Left cardiac atrium (tissue), 4 donors: ENCODE measurements at regions of chr11 and their contacts with region 1.

Region 1: GRCh38 chr11:44483919-44484610 is 81.4 kb upstream of the CD82 start:
- DNase-seq: no peak
- ATAC-seq: peak; percentile 24 to 41

Region 2: GRCh38 chr11:44286268-44286880 is 197.7 kb before region 1 on chr11:
- intact Hi-C with region 1: loop called in 1 of 2 experiments (anchors 5 kb)
- DNase-seq: peak; percentile 55
- ATAC-seq: peak; percentile 57 to 72

Region 3: DNA sequence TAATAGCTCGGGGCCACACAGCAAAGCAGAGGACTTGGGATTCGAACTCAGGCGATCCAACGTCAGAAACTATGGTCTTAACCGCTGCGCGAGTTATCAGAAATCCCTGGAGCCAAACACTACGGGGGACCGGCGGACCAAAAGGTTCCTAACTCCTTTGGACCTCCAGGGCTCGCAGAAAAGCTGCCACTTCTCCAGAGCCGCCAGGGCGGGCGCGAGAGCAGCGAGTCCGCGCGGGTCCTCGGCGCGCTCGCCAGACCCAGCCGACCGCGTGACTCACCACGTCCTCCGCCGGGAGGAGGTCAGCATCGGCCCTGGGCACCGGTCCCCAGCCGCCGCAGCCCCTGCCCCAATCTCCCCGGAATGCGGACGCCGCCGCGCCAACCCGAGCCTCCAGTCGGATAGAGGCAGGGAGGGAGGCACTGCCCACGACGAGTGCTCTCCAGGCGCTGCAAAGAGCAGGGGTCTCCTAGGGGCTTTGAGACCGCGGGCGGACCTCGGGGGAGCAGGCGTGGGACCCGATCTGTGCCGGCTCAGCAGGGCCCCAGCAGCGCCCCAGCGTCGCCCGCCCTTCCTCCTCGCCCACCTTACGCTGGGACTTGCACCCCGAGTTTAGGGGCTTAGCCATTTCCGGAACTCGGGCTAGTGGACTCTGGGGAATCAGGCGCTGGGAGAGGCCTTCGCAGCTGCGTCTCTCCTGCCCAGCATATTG is 168.0 kb before region 1 on chr11:
- intact Hi-C with region 1: no loop called
- DNase-seq: peak; percentile 50
- ATAC-seq: peak; percentile 64 to 86

Region 4: GRCh38 chr11:44427432-44427831 is 56.6 kb before region 1 on chr11:
- intact Hi-C with region 1: no loop called
- DNase-seq: no peak
- ATAC-seq: no peak

Region 5: GRCh38 chr11:44445500-44446365 is 38.3 kb before region 1 on chr11:
- intact Hi-C with region 1: no loop called
- DNase-seq: no peak
- ATAC-seq: no peak

Region 6: DNA sequence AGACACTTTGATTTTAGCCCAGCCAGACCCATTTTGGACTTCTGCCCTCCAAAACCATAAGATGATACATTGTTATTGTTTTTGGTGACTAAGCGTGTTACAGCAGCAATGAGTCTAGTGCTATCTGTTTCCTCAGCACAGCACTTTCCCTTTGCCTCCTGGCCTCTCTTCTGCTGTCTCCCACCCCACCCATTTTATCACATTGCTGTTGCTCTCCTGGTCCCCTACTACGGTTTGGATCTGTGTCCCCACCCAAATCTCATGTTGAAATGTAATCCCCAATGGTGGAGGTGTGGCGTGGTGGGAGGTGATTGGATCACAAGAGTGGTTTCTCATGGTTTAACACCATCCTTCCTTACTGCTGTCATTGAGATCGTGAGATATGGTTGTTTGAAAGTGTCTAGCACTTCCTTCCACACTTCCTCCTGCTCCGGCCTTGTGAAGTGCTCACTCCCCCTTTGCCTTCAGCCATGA is 21.6 kb after region 1 on chr11:
- intact Hi-C with region 1: no loop called
- DNase-seq: no peak
- ATAC-seq: no peak